AG04449 (cell line): ENCODE measurements at regions of chr1 and their contacts with region 1.

Region 1: GRCh38 chr1:149886396-149887195 is 12.8 kb upstream of the BOLA1 start:
- DNase-seq: peak; percentile 98
- H3K4me3 ChIP-seq: peak overlapping the region; percentile 69
- CTCF ChIP-seq: no peak

Region 2: GRCh38 chr1:149844101-149844500 is 42.5 kb before region 1 on chr1:
- CTCF ChIA-PET with region 1: interaction called, 11 read pairs
- POLR2A ChIA-PET with region 1: interaction called, 39 read pairs
- DNase-seq: no peak
- H3K4me3 ChIP-seq: peak overlapping the region; percentile 76
- CTCF ChIP-seq: no peak

Region 3: GRCh38 chr1:149849947-149850360 is 36.6 kb before region 1 on chr1:
- CTCF ChIA-PET with region 1: interaction called, 11 read pairs
- POLR2A ChIA-PET with region 1: interaction called, 39 read pairs
- DNase-seq: no peak
- H3K4me3 ChIP-seq: peak overlapping the region; percentile 68
- CTCF ChIP-seq: no peak

Region 4: DNA sequence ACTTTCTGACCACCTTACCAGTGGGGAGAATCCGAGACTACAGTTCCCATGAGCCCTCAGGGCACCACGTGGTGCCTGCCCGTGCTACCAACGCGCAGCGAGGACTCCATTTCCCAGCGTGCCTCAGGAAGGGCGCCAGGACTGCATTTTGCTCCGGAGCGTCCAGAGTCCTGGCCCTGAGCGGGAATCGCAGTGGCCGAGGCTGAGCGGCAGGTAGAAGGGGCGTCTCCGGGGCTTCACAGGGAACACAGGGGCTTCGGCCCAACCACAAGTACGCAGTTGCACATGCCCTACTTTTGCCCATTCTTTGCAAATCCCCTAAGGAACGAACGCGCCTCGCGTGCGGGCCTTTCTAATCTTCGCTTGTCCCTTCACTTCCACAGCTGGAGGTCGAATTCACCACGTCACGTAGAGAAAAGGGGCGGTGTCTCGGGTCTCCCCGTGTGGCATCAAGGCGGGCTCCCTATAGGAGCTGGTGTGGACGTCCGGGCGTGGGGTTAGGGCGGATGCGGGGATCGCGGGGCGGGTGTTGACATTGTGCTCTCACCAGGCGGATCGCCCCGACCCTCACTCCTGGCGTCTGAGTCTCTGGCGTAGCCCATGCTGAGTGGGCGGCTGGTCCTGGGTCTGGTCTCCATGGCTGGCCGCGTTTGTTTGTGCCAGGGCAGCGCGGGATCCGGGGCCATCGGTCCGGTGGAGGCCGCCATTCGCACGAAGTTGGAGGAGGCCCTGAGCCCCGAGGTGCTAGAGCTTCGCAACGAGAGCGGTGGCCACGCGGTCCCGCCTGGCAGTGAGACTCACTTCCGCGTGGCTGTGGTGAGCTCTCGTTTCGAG is 13.1 kb after region 1 on chr1 and contains the start of gene BOLA1:
- CTCF ChIA-PET with region 1: interaction called, 13 read pairs
- POLR2A ChIA-PET with region 1: interaction called, 20 read pairs
- DNase-seq: no peak
- H3K4me3 ChIP-seq: peak within 1 kb of the TSS; percentile 66
- CTCF ChIP-seq: no peak

Region 5: DNA sequence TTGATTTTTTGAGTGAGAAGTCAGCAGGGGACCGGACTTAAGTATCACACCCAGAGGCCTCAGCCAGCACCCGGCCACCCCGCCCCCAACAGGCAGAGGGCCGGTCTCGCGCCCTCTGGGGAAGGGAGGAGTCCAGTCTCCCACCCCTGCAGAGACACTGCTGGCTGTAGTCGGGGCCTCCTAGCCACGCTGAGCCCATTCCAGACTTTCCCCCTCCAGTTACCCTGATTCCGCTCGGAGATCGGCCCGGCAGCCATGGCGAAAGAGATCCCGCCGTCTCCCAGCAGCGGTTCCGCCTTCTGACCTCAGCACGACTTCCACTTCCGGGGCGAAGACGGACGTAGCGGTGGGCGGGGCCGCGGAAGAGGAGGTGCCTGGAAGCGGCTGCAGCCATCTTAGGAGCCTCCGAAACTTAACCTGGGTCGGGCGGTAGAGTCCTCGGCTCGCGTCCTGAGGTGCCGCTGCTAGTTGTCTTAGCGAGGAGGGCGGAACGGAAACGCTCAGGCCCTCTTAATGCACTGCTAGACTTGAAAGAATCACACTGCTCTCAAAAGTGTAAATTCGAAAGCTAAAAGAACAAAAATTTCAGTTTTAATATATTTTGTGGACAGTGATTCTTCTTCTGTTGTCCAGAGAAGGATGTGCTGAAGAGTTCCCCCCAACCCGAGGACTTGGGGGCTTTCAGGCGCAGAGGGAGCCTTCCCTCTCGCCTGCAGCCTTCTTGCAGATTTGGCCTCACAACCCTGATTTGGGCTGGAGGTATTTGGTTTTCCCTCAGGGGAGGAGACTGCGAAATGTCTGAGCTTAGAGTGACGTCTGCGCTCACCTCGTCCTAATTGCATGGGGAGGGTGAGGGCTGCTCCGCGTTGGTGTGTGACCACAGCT is 41.1 kb after region 1 on chr1 and contains the start of gene SF3B4:
- CTCF ChIA-PET with region 1: interaction called, 4 read pairs
- POLR2A ChIA-PET with region 1: interaction called, 12 read pairs
- DNase-seq: peak; percentile 49
- H3K4me3 ChIP-seq: peak within 1 kb of the TSS; percentile 99
- CTCF ChIP-seq: no peak

Region 6: GRCh38 chr1:150010393-150011115 is 124.0 kb after region 1 on chr1 and contains the start of gene OTUD7B:
- CTCF ChIA-PET with region 1: interaction called, 4 read pairs
- POLR2A ChIA-PET with region 1: interaction called, 15 read pairs
- DNase-seq: no peak
- H3K4me3 ChIP-seq: peak within 1 kb of the TSS; percentile 87
- CTCF ChIP-seq: peak; percentile 18

Region 7: GRCh38 chr1:150168960-150169601 is 282.5 kb after region 1 on chr1:
- CTCF ChIA-PET with region 1: interaction called, 12 read pairs
- POLR2A ChIA-PET with region 1: no interaction called
- DNase-seq: no peak
- H3K4me3 ChIP-seq: no peak overlapping the region
- CTCF ChIP-seq: peak; percentile 85

Region 8: GRCh38 chr1:150259758-150260669 is 373.4 kb after region 1 on chr1:
- CTCF ChIA-PET with region 1: no interaction called
- POLR2A ChIA-PET with region 1: no interaction called
- DNase-seq: no peak
- H3K4me3 ChIP-seq: no peak overlapping the region
- CTCF ChIP-seq: no peak

Region 9: DNA sequence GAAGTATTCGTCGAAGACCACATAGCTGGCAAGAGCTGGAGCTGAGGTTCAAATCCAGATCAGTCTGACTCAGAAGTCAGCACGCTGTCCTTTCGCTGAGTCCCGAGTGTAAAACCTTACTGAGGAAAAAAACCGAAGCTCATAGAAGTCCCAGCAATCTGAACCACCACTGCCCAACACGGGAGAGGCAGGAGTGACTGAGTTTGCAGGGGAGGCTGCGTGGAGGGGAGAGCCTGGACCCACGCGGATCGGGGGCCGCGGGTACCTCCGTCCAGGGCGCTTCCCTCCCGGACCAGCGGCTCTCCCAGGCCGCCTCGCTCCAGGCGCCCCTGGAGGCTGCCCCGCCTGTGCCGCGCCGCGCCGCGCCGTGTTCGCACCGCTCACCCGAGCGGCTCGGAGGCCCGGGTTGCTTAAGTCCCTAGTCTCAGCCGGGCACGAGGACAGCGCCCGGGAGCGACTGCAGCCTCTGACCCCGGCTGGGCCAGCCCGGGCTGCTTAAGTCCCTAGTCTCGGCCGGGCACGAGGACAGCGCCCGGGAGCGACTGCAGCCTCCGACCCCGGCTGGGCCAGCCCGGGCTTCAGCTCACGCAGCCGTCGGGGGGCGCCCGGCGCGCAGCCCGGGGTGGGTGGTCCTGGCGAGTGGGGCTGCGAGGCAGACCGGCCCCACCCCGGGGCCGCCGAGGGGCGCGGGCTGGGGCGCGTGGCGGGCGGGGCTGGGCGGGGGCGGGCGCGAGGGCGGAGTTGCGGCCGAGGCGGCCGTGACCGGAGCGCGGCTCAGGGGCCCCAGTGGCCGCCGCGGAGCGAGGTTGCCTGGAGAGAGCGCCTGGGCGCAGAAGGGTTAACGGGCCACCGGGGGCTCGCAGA is 662.3 kb after region 1 on chr1 and contains the start of gene ADAMTSL4:
- CTCF ChIA-PET with region 1: no interaction called
- POLR2A ChIA-PET with region 1: no interaction called
- DNase-seq: no peak
- H3K4me3 ChIP-seq: peak within 1 kb of the TSS; percentile 60
- CTCF ChIP-seq: no peak